ENCODE measurements at regions of chr11 and their contacts with region 1.

Region 1: DNA sequence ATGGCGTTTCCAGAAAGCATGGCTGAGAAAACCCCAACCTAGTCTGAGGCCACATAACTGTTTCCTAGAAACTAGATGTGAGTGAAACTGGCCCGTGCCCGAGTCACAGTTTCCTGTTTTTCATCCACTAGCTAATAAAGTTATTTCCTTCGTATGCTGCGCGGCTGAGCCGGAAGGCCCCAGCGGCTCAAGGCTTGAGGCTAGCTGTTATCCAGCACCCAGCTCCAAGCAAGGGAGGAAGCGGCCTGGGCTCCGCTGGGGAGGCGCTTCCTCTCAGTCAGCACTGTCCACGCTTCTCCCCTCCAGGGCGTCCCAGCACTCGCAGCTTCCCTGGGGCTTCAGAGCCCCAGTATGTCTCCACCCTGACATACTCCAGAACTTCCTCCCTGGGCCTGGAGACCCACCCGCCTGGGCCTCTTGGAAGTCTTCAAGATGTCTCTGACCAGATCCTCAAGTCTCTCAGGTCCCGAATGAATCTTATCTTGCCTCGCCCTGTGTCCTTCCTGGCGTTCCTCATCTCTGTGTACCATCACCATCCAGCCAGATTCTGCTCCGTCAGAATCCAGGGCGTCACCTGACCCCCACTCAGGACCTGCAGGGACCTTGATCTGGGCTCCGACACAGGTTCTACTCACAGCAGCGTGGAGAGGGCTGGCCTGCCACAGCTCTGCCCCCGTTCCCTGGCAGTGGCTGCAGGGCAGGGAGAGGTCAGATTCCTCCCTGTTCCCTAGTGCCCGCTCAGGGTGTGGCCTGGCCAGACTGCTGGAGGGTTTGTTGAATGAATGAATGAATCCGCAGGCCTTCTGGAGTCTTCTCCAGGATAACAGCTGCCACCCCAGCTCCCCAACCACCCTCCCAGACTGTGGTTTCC is 81.9 kb downstream of the LRRC32 start:
- DNase-seq: peak; percentile 84
- H3K4me3 Mint-ChIP-seq: no peak overlapping the region
- H3K27ac Mint-ChIP-seq: peak overlapping the region; percentile 86
- H3K4me1 Mint-ChIP-seq: peaks cover 42% of the 10 kb centered on the region
- H3K27me3 Mint-ChIP-seq: no peaks in the 10 kb centered on the region

Region 2: GRCh38 chr11:76551400-76551799 is 37.3 kb before region 1 on chr11:
- CTCF ChIA-PET with region 1: no interaction called
- POLR2A ChIA-PET with region 1: interaction called, 3 read pairs
- intact Hi-C with region 1: loop called (anchors 5 kb)
- DNase-seq: no peak
- H3K4me3 Mint-ChIP-seq: no peak overlapping the region
- H3K27ac Mint-ChIP-seq: no peak overlapping the region
- H3K4me1 Mint-ChIP-seq: peaks cover 13% of the 10 kb centered on the region
- H3K27me3 Mint-ChIP-seq: no peaks in the 10 kb centered on the region

Region 3: DNA sequence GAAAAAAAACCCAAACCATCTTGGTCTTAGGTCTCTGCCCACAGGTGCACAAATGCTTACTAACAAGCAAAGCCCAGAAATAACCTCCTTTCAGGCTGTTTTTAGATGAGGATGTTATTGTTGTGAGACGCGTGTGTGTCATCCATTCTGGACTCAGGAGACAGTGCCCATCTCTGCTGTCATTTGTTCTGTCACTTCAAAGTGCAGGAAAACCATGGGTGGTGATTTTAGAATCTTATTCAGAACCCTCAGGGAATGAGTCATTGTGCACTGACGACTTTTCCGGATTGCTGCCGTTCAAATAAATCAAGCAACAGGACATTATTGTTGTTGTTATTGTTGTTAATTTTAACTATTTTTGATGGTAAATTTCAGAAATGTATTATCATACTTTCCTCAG is 28.5 kb before region 1 on chr11:
- CTCF ChIA-PET with region 1: no interaction called
- POLR2A ChIA-PET with region 1: interaction called, 4 read pairs
- intact Hi-C with region 1: loop called (anchors 1 kb)
- DNase-seq: peak; percentile 61
- H3K4me3 Mint-ChIP-seq: no peak overlapping the region
- H3K27ac Mint-ChIP-seq: peak overlapping the region; percentile 74
- H3K4me1 Mint-ChIP-seq: peaks cover 34% of the 10 kb centered on the region
- H3K27me3 Mint-ChIP-seq: peaks cover 16% of the 10 kb centered on the region

Region 4: GRCh38 chr11:76568139-76568538 is 20.6 kb before region 1 on chr11:
- CTCF ChIA-PET with region 1: no interaction called
- POLR2A ChIA-PET with region 1: interaction called, 3 read pairs
- intact Hi-C with region 1: loop called (anchors 2 kb)
- DNase-seq: no peak
- H3K4me3 Mint-ChIP-seq: no peak overlapping the region
- H3K27ac Mint-ChIP-seq: peak overlapping the region; percentile 1
- H3K4me1 Mint-ChIP-seq: peaks cover 14% of the 10 kb centered on the region
- H3K27me3 Mint-ChIP-seq: peaks cover 9% of the 10 kb centered on the region

Region 5: DNA sequence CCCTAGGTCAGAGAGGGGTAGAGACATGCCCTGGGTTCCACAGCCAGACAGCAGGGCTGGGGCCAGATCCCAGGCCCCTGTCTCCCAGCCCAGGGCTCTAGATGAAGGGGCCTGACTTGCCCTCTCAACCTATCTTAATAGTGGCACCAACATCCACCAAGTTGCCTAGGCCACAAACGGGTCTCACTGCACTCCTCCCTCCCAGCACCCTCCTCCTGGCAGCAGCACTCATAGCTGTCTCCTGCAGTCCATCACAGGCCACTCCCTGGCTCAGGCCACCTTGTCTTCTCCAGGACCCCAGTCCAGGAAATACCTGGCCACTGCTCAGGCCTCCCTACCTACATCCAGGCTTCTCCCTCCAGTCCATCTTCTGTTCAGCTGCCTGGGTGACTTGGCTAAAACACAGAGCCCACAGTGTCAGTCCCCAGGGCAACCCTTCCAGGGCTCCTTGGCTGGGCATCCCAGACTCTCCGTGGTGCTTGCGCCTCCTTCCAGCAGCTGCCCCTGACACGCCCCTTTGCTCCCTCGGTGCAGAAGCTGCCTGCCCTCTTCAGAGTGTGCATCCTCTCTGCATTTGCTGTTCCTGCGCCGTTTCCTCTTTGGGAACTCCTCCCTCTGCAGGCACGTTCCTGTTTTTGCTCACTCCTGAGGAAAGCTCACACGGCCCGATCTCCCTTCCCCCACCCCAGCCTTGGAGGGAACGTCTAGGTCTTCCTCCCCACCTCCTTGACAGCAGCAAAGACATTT is 41.3 kb after region 1 on chr11:
- CTCF ChIA-PET with region 1: interaction called, 3 read pairs
- POLR2A ChIA-PET with region 1: interaction called, 7 read pairs
- intact Hi-C with region 1: loop called (anchors 1 kb)
- DNase-seq: peak; percentile 20
- H3K4me3 Mint-ChIP-seq: peak overlapping the region; percentile 8
- H3K27ac Mint-ChIP-seq: peak overlapping the region; percentile 85
- H3K4me1 Mint-ChIP-seq: peaks cover 41% of the 10 kb centered on the region
- H3K27me3 Mint-ChIP-seq: no peaks in the 10 kb centered on the region

Measured in activated CD4-positive, alpha-beta memory T cell treated with anti-CD3 and anti-CD28 coated beads for 36 hours (primary cell).